ENCODE measurements at regions of chr16 and their contacts with region 1.

Region 1: DNA sequence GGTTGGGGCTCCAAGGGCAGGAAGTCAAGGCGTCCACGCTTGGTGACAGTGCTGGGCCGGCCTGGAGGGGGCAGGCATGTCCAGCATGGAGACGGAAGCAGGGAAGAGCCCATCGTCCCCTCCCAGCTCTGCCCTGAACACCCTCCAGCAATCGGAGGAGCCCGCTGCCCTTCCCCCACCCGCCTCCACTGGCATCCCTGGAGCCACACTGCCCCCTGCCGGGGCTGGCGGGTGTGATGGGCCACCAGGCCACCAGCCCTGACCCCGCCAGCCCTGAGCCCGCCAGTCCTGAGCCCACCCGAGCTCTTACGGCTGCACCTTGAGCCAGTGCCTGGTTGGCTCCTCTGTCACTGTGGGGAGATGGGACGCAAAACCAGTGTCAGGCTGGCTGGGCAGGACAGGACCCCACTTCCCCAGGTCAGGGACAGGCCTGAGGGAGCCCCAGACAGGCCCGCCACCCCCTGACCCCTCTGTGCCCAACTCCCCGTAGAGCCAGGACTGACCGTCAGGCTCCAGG is 4.1 kb upstream of the CDH15 start:
- DNase-seq: peak; percentile 88
- CTCF ChIP-seq: peak; percentile 84

Region 2: DNA sequence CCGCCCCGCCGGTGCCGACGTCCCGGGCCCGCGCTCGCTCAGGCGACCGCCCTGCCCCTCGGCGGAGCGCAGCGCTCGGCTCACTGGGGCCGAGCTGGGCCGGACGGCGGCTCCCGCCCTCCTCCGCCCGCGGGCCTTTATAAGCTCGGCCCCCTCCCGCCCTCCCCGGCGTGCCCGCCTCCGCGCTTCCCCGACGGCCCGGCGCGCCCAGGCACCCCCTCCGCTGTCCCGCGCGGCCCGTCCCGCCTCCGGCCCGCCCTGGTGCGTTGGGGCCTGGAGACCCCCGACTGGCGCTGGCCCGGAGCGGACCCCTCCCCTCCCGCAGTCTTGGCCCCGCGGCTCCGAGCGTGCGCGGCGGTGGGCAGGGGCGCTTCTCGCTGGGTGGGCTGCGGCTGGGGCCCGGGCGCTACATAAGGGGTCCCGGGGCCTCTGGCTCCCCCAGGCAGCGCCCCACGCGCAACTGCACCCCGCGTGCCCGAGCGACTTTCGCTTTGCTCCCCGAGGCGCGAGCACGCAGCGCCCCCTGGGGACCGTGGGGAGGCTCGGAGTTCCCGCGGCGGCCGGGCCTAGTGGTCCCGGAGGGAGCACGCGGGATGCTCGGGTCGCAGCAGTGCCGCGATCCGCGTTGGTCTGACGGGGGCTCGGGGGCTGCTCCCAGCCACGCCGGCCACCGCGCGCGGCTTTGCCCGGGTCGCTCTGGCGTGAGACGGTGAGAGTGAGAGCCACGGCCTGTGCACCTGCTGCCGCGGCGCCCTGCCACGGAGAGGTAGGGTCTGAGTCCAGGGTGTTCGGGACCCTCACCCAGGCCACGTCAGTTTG is 382.2 kb before region 1 on chr16 and contains the start of gene PIEZO1:
- CTCF ChIA-PET with region 1: interaction called, 11 read pairs
- POLR2A ChIA-PET with region 1: no interaction called
- DNase-seq: peak; percentile 86
- CTCF ChIP-seq: peak; percentile 97

Region 3: DNA sequence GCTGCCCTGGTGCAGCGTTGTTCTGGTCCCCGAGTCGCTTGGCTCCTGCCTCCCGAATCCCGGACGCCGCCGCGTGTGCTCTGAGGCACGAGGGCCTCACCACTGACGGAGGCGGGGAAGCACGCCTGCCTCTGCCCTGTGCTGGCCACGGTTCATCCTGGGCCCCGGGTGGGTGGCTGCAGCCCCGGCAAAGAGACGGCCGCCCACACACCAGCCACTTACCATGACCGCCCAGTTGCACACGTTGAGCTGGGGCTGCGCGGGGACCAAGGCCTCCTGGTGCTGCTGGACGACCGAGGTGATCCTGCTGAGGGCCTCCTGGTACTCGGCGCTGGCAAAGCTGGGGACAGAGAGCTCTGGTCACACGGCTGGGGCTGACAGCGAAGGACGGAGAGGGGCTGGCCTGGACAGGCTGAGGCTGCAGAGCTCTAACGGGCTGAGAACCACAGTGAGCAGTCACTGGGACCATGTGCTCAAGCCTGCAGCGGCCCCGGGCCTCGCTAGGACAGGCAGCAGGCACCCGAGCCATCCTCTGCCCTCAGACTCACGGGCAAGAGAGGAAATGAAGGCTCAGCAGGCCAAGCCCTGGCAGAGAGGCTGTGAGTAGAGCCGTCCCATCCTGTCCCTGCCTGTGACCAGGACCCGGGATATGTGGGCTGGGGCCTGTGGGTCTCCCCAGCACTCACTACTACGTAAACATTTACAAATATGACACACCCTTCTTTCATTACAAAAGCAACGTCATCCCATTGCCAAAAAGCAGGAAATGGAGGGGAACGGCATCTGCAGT is 349.5 kb before region 1 on chr16:
- CTCF ChIA-PET with region 1: interaction called, 16 read pairs
- POLR2A ChIA-PET with region 1: no interaction called
- DNase-seq: no peak
- CTCF ChIP-seq: no peak

Region 4: DNA sequence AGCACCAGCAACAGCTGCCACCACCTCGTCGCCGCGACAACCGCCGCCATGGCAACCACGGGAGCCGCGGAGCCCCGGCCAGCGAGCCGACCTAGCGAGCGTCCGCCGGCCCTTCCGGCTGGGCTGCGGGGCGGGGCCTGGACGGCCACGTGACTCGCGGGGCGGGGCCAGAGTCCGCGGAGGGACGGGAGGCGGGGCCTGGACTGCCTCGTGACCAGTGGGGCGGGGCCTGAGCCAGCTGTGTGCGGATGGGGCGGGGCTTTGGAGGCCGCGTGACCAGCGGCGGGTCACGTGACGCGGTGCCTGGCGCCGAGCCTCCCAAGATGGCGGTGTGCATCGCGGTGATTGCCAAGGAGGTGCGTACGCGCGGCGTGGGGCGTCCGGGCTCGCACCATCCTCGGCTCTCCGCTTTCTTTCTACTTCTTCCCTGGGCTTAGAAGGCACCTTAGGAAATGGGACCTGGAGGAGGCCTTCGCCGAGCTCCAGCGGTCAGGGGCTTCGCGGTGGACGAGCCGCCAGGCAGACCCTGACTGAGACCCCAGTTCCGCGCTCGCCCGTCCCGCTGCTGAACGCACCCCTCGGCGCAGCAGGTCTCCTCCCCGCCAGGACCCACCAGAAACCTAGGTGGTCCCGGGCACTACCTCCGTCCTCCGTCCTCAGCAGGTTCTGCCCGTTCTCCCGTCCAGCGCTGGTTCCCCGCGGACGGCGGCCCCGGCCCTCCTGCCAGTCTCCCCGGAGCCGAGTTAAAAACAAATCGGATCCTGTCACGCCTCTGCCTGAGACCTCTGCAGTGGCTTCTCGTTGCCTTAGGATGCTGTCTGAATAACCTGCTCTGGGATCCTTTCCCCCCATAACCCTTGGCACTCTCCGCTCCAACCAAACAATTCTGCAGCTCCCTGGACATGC is 310.4 kb before region 1 on chr16 and contains the starts of genes GALNS and TRAPPC2L:
- CTCF ChIA-PET with region 1: interaction called, 11 read pairs
- POLR2A ChIA-PET with region 1: no interaction called
- DNase-seq: peak; percentile 100
- CTCF ChIP-seq: peak; percentile 2

Region 5: DNA sequence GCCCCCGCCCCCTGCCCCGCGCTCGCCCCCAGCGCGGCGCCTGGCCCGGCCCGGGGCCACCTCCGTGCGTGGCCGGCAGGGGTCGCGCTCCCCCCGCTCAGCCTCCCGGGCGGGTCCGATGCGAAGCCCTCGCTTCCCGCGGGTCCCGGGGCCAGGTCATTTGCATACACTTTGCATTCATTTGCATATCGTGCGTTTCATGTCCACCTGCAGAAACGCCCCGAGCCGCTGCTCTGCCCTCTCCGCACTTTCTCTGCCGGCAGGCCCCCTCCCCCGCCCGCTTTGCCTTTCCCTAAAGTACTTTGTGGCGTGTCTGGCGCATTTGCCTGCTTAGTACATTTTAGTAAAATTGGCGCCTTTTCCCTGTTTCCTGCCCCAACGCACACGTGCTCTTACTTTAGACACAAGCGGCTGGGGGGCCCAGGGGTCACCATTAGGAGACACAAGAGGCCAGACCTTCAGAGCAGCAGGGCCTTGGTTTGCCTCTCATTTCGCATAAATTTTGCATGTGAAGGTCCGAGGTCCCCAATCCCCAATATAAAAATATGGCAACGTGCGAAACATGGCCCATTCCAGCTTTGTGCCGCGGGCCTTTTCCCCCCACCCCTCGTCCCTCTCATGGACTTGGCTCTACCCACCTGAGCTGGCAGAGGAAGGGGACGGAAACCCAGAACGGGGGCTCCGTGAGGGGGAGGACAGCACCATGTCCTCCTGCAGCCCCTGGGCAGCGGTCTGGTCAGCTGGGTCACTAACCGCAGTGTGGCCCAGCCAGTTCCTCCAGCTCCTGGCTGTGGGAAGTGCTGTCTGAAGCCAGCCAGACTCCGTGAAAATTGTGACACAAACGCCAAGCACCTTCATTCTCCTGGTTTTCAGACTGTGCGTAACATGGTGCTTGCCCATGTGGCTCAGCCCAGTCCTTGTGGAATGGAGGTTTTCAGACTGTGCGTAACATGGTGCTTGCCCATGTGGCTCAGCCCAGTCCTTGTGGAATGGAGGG is 225.3 kb before region 1 on chr16:
- CTCF ChIA-PET with region 1: interaction called, 31 read pairs
- POLR2A ChIA-PET with region 1: no interaction called
- DNase-seq: peak; percentile 89
- CTCF ChIP-seq: peak; percentile 79

Region 6: GRCh38 chr16:89143201-89143741 is 24.2 kb before region 1 on chr16:
- CTCF ChIA-PET with region 1: no interaction called
- POLR2A ChIA-PET with region 1: no interaction called
- DNase-seq: no peak
- CTCF ChIP-seq: no peak

Region 7: GRCh38 chr16:89155184-89155679 is 12.3 kb before region 1 on chr16:
- CTCF ChIA-PET with region 1: interaction called, 10 read pairs
- POLR2A ChIA-PET with region 1: interaction called, 3 read pairs
- DNase-seq: no peak
- CTCF ChIP-seq: no peak

Region 8: GRCh38 chr16:89613231-89613953 is 445.9 kb after region 1 on chr16 and contains the start of gene DPEP1:
- CTCF ChIA-PET with region 1: no interaction called
- POLR2A ChIA-PET with region 1: no interaction called
- DNase-seq: no peak
- CTCF ChIP-seq: no peak

Measured in GM10248 (cell line).